Colonic mucosa (tissue), 4 donors: ENCODE measurements at regions of chr9 and their contacts with region 1.

Region 1: DNA sequence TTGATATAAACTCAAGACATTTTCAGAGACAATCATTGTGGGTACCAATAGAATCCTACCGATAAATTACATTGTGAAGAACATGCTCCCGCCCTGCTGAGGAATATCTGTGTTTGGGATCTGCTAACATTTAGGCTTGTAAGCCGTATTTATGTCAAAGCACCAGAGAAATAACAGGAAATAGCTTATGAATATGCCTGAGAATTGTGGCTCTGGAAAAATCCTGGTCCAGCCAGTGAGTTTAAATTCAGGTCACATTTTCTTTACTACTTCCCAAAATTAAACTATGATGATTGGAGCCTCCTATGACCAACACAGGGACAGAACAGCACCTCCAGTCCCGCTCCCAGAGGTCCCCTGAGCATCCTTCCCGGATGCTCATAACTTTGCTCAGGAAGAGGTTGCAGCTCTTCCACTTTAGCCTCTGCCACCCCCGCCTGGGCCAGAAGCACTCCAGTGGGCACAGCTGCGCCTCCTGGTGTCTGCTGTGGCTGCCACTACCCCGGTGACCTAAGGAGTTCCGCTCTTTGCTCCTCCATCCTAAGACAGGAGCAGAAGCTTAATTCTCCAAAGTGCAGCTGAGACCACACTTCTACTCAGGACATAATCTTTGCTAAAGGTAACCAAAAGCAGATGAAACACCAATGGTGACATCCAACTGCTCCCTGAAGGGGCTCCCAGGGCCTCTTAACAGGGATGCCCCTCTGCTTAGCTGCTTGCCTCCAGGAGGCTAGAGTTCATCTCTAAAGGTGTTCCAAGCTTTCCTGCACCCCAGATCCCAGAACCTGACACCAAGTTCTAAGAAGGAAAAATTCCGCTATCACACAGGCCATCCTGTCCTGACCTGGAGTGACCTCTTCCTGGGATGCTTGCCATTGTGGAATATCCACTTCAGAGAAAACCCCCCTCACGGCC is 58.8 kb downstream of the SLC1A1 start:
- DNase-seq: no peak
- H3K4me3 ChIP-seq: no peak overlapping the region
- H3K27ac ChIP-seq: no peak overlapping the region
- H3K4me1 ChIP-seq: peaks cover 2% of the 10 kb centered on the region
- H3K27me3 ChIP-seq: no peaks in the 10 kb centered on the region
- CTCF ChIP-seq: peak; percentile 29

Region 2: DNA sequence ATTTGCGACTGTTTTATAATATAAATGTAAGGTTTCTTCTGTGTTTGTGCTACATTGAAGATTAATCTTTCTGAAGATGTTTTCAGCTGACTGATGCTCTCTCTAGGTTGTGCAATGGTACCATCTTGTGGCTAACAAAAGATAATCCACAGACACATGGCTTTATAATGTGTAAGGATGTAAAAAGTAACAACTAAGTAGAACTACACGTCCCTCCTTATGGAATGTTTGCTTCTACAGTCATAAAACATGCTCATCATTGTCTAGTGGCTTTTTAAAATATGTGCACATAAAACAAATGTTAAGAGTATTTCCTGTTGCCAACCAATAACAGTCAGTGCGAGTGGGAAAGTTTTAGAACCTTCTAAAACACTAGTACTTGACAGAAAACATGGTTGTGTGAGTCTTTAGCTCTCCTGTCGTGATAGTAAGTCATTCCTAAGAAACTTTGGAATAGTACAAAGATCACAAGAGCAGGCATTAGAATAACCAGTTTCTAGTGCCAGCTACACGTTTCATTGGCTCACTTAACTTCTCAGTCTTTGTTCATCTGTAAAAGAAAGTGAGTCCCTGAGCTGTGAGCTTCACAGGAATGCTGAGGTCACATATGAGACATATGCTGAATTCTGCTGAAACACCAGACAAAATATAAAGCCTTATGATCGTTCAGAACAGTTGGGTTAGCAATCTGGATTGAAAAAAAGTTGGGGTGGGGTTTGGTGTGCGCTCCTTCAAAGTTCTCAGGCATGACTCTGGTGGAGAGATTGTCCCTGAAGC is 173.5 kb before region 1 on chr9:
- intact Hi-C with region 1: no loop called
- DNase-seq: no peak
- H3K4me3 ChIP-seq: no peak overlapping the region
- H3K27ac ChIP-seq: no peak overlapping the region
- H3K4me1 ChIP-seq: no peaks in the 10 kb centered on the region
- H3K27me3 ChIP-seq: no peaks in the 10 kb centered on the region
- CTCF ChIP-seq: peak; percentile 33

Region 3: DNA sequence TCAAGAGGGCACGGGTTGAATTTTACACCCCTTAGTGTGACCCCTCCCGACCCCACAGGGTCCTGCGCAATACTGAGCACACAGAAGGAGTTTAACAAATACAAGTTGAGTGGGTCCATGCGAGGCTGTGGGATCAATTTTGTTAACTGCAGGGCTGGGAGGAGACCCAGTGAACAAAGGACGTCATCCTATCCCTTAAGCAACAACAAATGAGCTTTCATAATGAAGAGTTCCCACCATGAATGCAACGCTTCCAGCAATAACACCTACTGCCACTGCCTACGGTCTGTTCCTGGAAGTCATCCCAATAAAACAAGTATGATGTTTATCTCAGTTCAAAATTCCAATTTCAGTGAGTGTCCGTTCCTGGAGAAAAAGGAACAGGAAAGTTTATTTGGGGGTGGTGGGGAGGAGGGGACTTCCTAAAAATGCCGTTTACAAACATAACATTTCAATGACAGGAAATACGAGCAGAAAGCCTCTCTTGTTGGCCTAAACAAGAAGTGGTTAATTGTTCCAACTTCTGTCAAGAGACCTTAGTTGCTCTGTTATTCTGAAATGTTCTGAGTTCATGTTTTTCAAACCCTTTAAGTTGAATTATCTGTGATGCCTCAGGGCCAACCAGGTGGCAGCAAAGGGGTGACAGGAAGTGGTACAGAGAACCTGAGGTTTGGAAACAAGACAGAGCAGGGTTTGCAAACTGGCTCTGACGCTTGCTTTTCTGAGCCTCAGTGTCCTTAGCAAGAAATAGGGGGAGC is 47.3 kb after region 1 on chr9:
- intact Hi-C with region 1: loop called (anchors 5 kb)
- DNase-seq: no peak
- H3K4me3 ChIP-seq: no peak overlapping the region
- H3K27ac ChIP-seq: no peak overlapping the region
- H3K4me1 ChIP-seq: no peaks in the 10 kb centered on the region
- H3K27me3 ChIP-seq: no peaks in the 10 kb centered on the region
- CTCF ChIP-seq: no peak